T-cell (primary cell): ENCODE measurements at regions of chrX and their contacts with region 1.

Region 1: GRCh38 chrX:24464836-24465531 is at the start of gene PDK3:
- DNase-seq: peak; percentile 73 to 93 (median 86)
- ATAC-seq: peak; percentile 95 to 98 (median 96)
- H3K4me3 ChIP-seq: peak within 1 kb of the TSS; percentile 69 to 81
- H3K4me3 Mint-ChIP-seq: peak within 1 kb of the TSS; percentile 83 to 84 (median 84)
- H3K27ac ChIP-seq: peak within 1 kb of the TSS; percentile 94
- H3K27ac Mint-ChIP-seq: peak within 1 kb of the TSS; percentile 87 to 89
- H3K4me1 ChIP-seq: peaks cover 17 to 20% of the 10 kb centered on the region in 2 experiments
- H3K4me1 Mint-ChIP-seq: peaks cover 31 to 40% (median 37%) of the 10 kb centered on the region in 3 donors
- H3K27me3 ChIP-seq: no peaks in the 10 kb centered on the region
- H3K27me3 Mint-ChIP-seq: no peaks in the 10 kb centered on the region
- total RNA-seq, gene PDK3: 17.0 to 23.6 (median 19.9) TPM

Region 2: DNA sequence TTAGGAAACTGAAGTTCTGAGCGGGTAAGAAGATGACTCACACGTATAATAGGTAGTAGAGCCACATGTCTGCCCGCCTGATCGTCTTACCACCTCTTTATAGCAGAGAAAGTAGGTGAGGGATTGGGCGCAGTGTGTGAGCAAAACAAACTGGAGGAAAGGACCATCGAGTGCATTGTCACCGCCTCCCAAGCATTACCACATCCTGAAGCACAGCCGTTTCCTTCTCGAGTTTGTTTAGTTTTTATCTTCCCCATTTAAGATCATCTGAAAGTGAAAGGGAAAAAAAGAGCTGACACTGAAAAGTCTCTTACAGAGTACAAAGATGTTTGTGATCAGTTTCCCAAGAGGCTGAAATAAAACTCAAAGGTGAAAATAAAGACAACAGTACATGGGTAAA is 14.9 kb after region 1 on chrX:
- CTCF ChIA-PET with region 1: interaction called, 6 to 7 read pairs
- POLR2A ChIA-PET with region 1: interaction called, 3 to 16 read pairs
- DNase-seq: peak; percentile 42 to 90 (median 75)
- ATAC-seq: peak; percentile 97 to 99 (median 98)
- H3K4me3 ChIP-seq: peak overlapping the region; percentile 38 to 42
- H3K4me3 Mint-ChIP-seq: peak overlapping the region; percentile 52 to 76 (median 68)
- H3K27ac ChIP-seq: peak overlapping the region; percentile 95
- H3K27ac Mint-ChIP-seq: peak overlapping the region; percentile 92
- H3K4me1 ChIP-seq: peaks cover 33 to 38% of the 10 kb centered on the region in 2 experiments
- H3K4me1 Mint-ChIP-seq: peaks cover 44 to 80% (median 79%) of the 10 kb centered on the region in 3 donors
- H3K27me3 ChIP-seq: no peaks in the 10 kb centered on the region
- H3K27me3 Mint-ChIP-seq: peaks cover 0 to 4% of the 10 kb centered on the region in 2 donors